Common myeloid progenitor, CD34-positive (primary cell): ENCODE measurements at regions of chr17 and their contacts with region 1.

Region 1: GRCh38 chr17:7191571-7192270 is 12.6 kb upstream of the ASGR1 start:
- DNase-seq: peak in 2 of 3 donors; percentile 33 to 39
- H3K4me3 ChIP-seq: no peak overlapping the region
- H3K27ac ChIP-seq: no peak overlapping the region
- H3K4me1 ChIP-seq: no peaks in the 10 kb centered on the region
- H3K27me3 ChIP-seq: no peaks in the 10 kb centered on the region

Region 2: DNA sequence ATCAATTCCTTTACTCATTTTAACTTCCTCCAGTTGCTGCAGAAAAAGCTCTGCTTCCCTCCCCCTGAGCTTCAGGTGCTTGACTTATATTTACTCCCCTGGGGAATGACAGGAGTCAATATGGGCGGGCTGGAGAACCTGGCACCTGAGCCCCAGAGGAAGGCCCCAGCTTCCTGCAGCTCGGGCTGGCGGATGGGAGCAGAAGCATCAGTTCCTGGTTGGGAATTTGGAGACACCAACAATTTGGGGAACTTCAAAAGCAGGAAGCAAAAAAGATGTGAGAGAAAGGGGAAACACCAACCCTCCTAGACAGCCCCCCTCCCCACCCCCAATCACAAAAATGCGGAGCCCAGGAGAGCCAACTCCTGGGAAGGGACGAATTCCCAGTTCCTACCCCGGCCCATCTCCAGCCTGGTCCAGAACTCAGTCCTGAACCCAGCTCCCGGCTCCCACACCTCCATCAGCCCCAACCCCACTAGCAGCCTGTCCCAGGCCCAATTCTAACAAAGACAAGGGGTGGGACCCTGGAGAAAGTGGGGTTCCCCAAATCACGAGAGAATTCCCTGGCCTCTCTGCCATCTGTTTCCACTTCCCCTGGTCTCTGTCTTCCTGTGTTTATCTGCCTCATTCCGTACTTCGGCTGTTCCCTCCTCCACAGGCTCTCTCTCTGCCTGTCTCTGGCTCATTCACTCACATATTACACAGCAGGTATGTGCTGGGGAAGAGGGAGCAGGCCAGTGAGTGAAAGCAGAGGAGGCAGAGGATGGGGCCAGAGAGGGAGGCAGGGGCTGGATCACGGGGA is 60.9 kb before region 1 on chr17:
- CTCF ChIA-PET with region 1: no interaction called
- POLR2A ChIA-PET with region 1: no interaction called
- DNase-seq: peak in 2 of 3 donors; percentile 77 to 83
- H3K4me3 ChIP-seq: peak overlapping the region in 2 of 7 experiments; percentile 11 to 13
- H3K27ac ChIP-seq: peak overlapping the region in 1 of 2 experiments; percentile 21
- H3K4me1 ChIP-seq: peaks cover 0 to 43% (median 32%) of the 10 kb centered on the region in 4 experiments
- H3K27me3 ChIP-seq: no peaks in the 10 kb centered on the region

Region 3: DNA sequence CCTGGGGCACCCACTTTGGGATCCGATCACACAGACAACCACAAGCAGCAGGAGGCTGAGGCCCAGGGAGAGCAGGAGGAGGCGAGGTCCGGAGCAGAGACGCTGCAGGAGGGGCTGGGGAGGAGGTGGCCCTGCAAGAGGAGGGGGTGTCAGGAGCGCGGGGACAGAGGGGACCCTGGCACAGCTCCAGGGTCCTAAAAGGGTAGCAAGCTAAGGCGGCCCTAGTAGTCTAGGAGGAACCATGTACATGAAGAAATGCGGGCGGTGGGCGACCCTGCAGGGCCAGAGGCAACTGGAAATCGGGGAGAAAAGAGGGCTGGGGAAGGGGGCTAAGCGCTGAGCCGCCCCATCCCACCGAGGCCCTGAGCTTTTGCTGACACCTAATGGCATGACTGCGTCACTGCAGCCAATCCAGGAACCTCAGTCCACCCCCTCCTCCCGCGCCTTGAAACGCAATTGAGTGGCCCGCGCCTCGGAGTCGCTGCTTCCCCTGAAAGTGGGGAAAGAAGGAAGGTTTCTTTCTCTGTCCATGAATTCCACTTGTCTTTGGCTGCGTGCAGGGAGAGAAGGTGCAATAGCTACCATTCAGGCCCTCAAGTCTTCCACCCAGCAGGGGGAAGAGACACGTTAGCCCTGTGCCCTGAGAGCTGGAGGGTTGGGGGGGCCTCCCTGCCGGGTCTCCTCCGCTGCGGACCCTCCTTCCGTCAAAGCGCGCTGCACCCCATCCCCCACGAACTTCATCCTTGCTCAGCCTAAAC is 14.3 kb before region 1 on chr17:
- CTCF ChIA-PET with region 1: interaction called, 14 read pairs
- POLR2A ChIA-PET with region 1: no interaction called
- DNase-seq: peak; percentile 66 to 81 (median 80)
- H3K4me3 ChIP-seq: peak overlapping the region; percentile 24 to 90 (median 70)
- H3K27ac ChIP-seq: no peak overlapping the region
- H3K4me1 ChIP-seq: peaks cover 0 to 35% (median 28%) of the 10 kb centered on the region in 4 experiments
- H3K27me3 ChIP-seq: no peaks in the 10 kb centered on the region